ENCODE measurements at regions of chr3 and their contacts with region 1.

Region 1: GRCh38 chr3:4776980-4777581 is 202.2 kb upstream of the BHLHE40 start:
- DNase-seq: peak; percentile 80
- H3K4me3 Mint-ChIP-seq: peak overlapping the region; percentile 60
- H3K27ac Mint-ChIP-seq: peak overlapping the region; percentile 97
- H3K4me1 Mint-ChIP-seq: peaks cover 59% of the 10 kb centered on the region
- H3K27me3 Mint-ChIP-seq: no peaks in the 10 kb centered on the region

Region 2: DNA sequence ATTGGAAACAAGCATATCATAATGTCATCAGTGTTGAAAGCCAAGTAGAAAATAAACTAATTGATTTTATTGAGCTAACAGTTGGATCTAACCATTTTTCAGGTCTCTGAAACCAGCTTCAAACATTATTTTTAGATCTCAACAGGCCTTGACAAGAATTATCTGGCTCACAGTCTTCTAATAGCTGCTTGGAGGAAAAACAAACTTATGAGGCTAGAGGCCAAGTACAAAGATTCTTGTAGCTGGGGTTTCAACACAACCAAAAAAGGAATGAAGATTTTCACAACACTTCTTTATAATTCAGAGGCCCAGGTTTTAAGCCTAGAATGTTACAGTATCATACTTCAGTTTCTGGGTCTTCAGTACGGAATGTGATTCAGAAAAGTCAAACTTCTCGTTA is 470.2 kb before region 1 on chr3:
- intact Hi-C with region 1: no loop called
- DNase-seq: no peak
- H3K4me3 Mint-ChIP-seq: no peak overlapping the region
- H3K27ac Mint-ChIP-seq: no peak overlapping the region
- H3K4me1 Mint-ChIP-seq: peaks cover 21% of the 10 kb centered on the region
- H3K27me3 Mint-ChIP-seq: no peaks in the 10 kb centered on the region

Region 3: GRCh38 chr3:4670352-4670751 is 106.7 kb before region 1 on chr3:
- intact Hi-C with region 1: no loop called
- DNase-seq: no peak
- H3K4me3 Mint-ChIP-seq: no peak overlapping the region
- H3K27ac Mint-ChIP-seq: no peak overlapping the region
- H3K4me1 Mint-ChIP-seq: peaks cover 2% of the 10 kb centered on the region
- H3K27me3 Mint-ChIP-seq: no peaks in the 10 kb centered on the region

Region 4: GRCh38 chr3:4722103-4722502 is 55.0 kb before region 1 on chr3:
- intact Hi-C with region 1: loop called (anchors 1 kb)
- DNase-seq: peak; percentile 80
- H3K4me3 Mint-ChIP-seq: no peak overlapping the region
- H3K27ac Mint-ChIP-seq: peak overlapping the region; percentile 68
- H3K4me1 Mint-ChIP-seq: peaks cover 61% of the 10 kb centered on the region
- H3K27me3 Mint-ChIP-seq: no peaks in the 10 kb centered on the region

Region 5: GRCh38 chr3:4751502-4752101 is 25.5 kb before region 1 on chr3:
- intact Hi-C with region 1: loop called (anchors 1 kb)
- DNase-seq: no peak
- H3K4me3 Mint-ChIP-seq: peak overlapping the region; percentile 54
- H3K27ac Mint-ChIP-seq: peak overlapping the region; percentile 92
- H3K4me1 Mint-ChIP-seq: peaks cover 63% of the 10 kb centered on the region
- H3K27me3 Mint-ChIP-seq: no peaks in the 10 kb centered on the region

Region 6: DNA sequence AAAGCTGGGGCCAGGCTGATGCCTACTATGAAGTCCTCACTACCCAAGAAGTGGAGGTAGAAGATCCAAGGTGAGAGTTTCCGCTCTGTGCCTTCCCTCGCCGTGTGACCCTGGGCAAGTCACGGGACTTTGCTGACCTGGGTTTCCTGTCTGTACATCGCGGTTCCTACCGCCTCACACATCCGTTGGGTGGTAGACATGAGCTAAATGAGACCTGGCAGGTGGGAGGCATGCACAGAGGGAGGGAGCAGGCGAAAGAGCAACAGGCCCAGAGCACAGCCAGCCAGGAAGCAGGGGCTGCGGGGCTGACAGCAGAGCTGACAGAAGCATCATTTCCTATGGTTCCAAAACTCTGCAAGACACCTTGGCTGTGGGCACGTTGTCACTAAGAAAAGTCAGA is 44.9 kb after region 1 on chr3:
- intact Hi-C with region 1: loop called (anchors 1 kb)
- DNase-seq: peak; percentile 93
- H3K4me3 Mint-ChIP-seq: peak overlapping the region; percentile 75
- H3K27ac Mint-ChIP-seq: peak overlapping the region; percentile 97
- H3K4me1 Mint-ChIP-seq: peaks cover 84% of the 10 kb centered on the region
- H3K27me3 Mint-ChIP-seq: no peaks in the 10 kb centered on the region

Region 7: DNA sequence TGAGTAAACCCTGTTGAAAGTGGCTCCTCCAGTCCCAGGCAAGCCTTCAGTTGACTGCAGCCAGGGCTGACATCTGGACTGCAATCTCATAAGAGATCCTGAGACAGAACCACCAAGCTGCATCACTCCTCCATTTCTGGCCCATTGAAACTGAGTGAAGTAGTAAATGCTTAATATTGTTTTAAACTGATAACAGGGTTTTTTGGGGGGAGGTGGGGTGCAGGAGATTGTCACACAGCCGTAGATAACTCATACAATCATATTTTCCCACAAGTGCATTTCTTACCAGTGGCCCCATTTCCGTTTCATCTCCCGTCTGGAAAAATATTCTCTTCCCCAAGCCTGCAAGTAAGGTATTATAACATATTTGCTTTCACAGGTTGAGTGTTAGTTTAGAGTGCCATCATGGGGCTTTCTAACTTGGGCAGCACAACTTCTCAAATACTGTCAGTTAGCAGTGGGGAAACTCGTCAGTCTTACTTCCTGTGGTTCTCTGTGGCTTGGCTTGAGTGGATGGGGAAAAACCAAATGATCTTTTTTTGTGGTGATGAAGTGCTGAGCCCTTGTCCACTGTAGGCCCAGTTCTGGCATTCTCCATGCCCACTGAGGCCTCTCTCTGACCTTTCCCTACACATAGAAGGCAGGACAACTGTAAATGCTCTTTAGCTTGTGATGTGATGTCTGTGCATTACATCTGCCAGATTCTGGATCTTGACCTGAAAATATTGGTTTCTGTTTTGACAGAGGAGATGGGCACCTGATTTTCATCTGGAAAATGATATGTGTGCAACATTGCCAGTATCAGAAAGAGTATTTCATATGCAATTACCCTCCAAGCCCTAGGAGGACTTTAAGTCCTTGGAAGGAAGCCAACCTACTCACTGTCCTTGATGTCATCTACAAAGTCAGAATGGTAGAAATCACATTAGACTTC is 112.1 kb after region 1 on chr3:
- intact Hi-C with region 1: loop called (anchors 1 kb)
- DNase-seq: peak; percentile 87
- H3K4me3 Mint-ChIP-seq: peak overlapping the region; percentile 49
- H3K27ac Mint-ChIP-seq: peak overlapping the region; percentile 89
- H3K4me1 Mint-ChIP-seq: peaks cover 44% of the 10 kb centered on the region
- H3K27me3 Mint-ChIP-seq: no peaks in the 10 kb centered on the region

Region 8: DNA sequence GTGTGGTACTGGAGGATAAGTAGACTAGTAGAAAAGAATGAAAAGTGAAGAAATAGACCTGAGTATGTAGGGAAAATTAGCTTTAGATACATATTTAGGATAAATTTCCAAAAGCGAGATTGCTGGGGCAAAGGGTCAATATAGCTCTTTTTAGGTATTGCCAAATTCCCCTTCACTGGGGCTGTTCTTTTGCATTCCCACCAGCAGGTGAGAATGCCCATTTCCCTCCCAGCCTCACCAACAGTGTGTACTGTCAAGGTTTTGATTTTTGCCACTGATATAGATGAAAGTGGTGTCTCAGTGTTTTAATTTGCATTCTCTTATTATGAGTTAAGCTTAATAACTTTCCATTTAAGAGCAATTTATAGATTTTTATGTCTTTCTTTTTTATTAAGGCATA is 166.5 kb after region 1 on chr3:
- intact Hi-C with region 1: no loop called
- DNase-seq: peak; percentile 47
- H3K4me3 Mint-ChIP-seq: no peak overlapping the region
- H3K27ac Mint-ChIP-seq: no peak overlapping the region
- H3K4me1 Mint-ChIP-seq: peaks cover 2% of the 10 kb centered on the region
- H3K27me3 Mint-ChIP-seq: no peaks in the 10 kb centered on the region

Region 9: GRCh38 chr3:5006755-5007202 is 229.7 kb after region 1 on chr3:
- intact Hi-C with region 1: loop called (anchors 1 kb)
- DNase-seq: peak; percentile 95
- H3K4me3 Mint-ChIP-seq: peak overlapping the region; percentile 71
- H3K27ac Mint-ChIP-seq: peak overlapping the region; percentile 95
- H3K4me1 Mint-ChIP-seq: peaks cover 61% of the 10 kb centered on the region
- H3K27me3 Mint-ChIP-seq: no peaks in the 10 kb centered on the region

Measured in activated CD4-positive, alpha-beta T cell treated with anti-CD3 and anti-CD28 coated beads, Interleukin-2, amount 10 ng/mL, durations not matched to agents 24 days and 14 days (primary cell).